Common myeloid progenitor, CD34-positive (primary cell): ENCODE measurements at regions of chr1 and their contacts with region 1.

Region 1: DNA sequence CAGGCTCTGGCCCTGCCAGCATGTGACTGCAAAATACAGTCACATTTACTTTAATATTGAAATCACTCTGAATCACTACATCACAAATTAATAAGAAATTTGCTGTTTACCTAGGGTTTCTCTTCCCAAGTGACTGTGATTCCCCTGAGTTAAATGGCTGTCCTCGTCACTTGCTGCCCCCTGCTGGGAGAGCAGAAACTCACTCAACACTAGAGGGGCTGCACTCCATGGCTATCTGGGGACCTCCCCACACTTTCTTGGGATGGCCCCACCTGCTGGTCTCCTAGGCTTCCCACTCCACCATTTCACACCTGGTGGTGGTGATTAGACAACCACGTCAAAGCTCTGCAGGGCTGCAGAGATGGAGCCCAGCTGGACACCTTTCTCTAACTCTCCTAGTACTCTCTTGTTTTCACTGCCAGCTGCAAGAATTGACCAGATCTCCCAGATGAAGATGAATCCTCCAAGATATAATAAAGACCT is 63.4 kb downstream of the CD2 start:
- DNase-seq: peak; percentile 77 to 83 (median 78)
- H3K4me3 ChIP-seq: no peak overlapping the region
- H3K27ac ChIP-seq: no peak overlapping the region
- H3K4me1 ChIP-seq: peaks cover 4 to 15% (median 10%) of the 10 kb centered on the region in 4 experiments
- H3K27me3 ChIP-seq: no peaks in the 10 kb centered on the region

Region 2: GRCh38 chr1:116769561-116769977 is 48.1 kb before region 1 on chr1:
- CTCF ChIA-PET with region 1: interaction called, 10 read pairs
- POLR2A ChIA-PET with region 1: no interaction called
- DNase-seq: peak; percentile 83 to 98 (median 97)
- H3K4me3 ChIP-seq: peak overlapping the region in 3 of 7 experiments; percentile 20 to 41 (median 38)
- H3K27ac ChIP-seq: no peak overlapping the region
- H3K4me1 ChIP-seq: peaks cover 19 to 39% (median 31%) of the 10 kb centered on the region in 4 experiments
- H3K27me3 ChIP-seq: peaks cover 0 to 4% (median 0%) of the 10 kb centered on the region in 5 experiments